Left ventricle myocardium superior (tissue), 1 donor: ENCODE measurements at regions of chr5 and their contacts with region 1.

Region 1: GRCh38 chr5:158174918-158175851 is 316.2 kb upstream of the CLINT1 start:
- DNase-seq: peak; percentile 67
- ATAC-seq: peak; percentile 94

Region 2: DNA sequence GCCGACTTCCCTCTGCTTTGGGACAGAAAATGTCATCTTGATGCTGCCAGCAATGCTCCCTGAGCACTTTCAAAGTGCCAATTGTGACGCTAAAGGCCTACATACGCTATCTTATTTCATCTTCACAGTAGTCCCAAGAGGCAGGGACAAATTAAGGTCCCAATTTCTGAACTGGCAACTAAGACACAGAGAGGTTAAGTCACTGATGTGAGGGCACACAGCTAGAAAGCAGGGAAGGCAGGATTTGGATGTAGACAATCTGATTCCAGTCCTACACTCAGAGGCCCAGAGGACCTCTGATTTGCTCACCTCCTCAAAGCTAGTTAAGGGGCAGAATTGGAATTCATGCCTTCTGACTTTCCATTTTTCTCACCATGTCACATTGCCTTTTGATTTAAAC is 67.0 kb before region 1 on chr5:
- intact Hi-C with region 1: no loop called
- DNase-seq: no peak
- ATAC-seq: no peak

Region 3: GRCh38 chr5:158695595-158696330 is 520.6 kb after region 1 on chr5:
- intact Hi-C with region 1: loop called (anchors 10 kb)
- DNase-seq: peak; percentile 86
- ATAC-seq: peak; percentile 71

Region 4: DNA sequence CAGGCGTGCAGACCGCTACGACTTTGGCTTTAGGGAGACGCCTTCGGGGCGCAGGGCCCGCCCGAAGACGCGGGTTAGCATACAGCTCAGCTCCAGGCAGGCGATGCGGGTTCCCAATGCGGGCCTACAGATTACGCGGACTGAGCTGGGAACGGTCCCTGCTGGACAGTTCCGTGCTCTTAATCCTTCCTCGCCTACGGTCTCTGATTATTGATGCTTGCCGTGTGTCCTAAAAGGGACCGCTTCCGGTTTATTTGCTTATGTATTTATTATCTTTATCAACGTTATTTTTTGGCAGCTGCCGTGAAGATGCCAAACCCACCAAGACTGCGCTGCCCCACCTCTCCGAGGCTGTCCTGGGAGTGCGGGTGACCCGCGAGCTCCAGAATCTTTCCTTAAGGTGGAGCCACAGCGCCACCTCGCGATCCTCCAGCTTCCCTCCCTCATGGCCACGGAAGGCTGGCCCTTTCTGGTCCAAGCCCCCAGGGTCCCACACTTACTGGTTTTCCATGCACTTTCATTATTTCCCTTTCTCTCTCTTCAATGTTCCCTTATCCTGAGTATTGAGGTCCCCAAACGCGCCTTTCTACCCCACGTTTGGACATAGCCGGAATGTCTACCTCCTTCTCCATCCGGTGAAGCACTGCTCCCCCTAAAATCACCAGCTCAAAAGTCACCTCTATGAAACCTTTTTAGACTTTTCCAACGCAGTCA is 931.5 kb after region 1 on chr5:
- intact Hi-C with region 1: loop called (anchors 5 kb)
- DNase-seq: peak; percentile 89
- ATAC-seq: peak; percentile 90